T-cell (primary cell): ENCODE measurements at regions of chr7 and their contacts with region 1.

Region 1: DNA sequence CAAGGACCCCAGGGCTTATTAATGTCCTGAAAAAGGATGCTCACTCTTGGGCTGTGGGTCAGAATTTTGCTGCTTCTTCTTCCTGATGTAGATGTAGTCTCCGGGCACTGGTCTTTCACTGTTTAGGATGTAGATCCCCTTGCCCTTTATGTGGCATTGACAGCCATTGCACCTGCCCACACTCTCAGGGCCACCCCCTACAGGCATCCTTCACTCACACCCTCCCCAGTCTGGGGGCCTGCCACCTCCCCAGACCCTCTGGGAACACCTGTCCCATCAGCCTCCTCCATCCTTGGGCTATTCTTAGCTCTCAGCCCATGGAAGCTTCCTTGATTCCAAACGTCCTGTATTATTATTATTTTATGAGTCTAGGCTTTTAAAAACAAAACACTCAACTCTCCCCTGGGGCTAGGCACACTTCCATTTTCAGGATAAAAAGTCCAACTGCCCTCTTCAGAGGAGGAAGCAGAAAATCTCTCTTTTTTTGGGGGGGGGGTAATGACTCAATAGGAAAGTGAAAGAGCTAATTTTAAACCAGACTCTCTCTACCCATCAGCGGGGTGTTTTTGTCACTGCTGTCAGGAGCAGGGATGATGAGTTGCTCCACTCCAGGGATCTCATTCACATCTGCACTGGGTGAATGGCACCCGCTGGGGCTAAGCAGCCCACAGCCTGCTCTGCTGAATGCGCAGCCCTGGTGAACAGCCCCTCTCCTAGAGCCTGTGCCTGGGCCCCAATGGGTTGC is 11.5 kb upstream of the KLRG2 start:
- DNase-seq: no peak
- ATAC-seq: no peak
- H3K4me3 ChIP-seq: no peak overlapping the region
- H3K4me3 Mint-ChIP-seq: no peak overlapping the region
- H3K27ac ChIP-seq: no peak overlapping the region
- H3K27ac Mint-ChIP-seq: no peak overlapping the region
- H3K4me1 ChIP-seq: peaks cover 0 to 4% of the 10 kb centered on the region in 2 experiments
- H3K4me1 Mint-ChIP-seq: peaks cover 5 to 10% (median 6%) of the 10 kb centered on the region in 3 donors
- H3K27me3 ChIP-seq: peaks cover 0 to 14% of the 10 kb centered on the region in 2 experiments
- H3K27me3 Mint-ChIP-seq: peaks cover 0 to 2% of the 10 kb centered on the region in 2 donors

Region 2: GRCh38 chr7:139297795-139298194 is 197.2 kb before region 1 on chr7:
- CTCF ChIA-PET with region 1: no interaction called
- POLR2A ChIA-PET with region 1: no interaction called
- DNase-seq: no peak
- ATAC-seq: no peak
- H3K4me3 ChIP-seq: no peak overlapping the region
- H3K4me3 Mint-ChIP-seq: no peak overlapping the region
- H3K27ac ChIP-seq: no peak overlapping the region
- H3K27ac Mint-ChIP-seq: no peak overlapping the region
- H3K4me1 ChIP-seq: no peaks in the 10 kb centered on the region
- H3K4me1 Mint-ChIP-seq: no peaks in the 10 kb centered on the region
- H3K27me3 ChIP-seq: no peaks in the 10 kb centered on the region
- H3K27me3 Mint-ChIP-seq: no peaks in the 10 kb centered on the region

Region 3: DNA sequence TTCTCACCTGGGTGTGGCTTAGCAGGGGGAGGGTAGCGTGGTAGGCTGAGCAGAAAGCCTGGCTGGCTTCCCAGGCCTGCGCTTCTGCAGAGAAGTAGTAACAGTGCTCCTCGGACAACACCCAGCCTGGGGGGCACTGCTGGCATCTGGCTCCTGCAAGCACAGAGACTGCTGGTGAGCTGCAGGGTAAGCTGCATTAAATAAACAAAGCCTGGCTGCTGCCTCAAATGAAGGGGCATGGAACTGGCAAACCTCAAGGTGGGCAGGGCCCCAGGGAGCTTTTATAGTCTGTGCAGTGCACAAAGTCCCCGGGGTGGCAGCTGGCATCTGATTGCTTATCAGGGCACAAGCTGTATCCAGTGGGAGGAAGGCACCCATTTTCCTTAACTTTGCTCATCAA is 15.4 kb before region 1 on chr7:
- CTCF ChIA-PET with region 1: no interaction called
- POLR2A ChIA-PET with region 1: no interaction called
- DNase-seq: no peak
- ATAC-seq: no peak
- H3K4me3 ChIP-seq: no peak overlapping the region
- H3K4me3 Mint-ChIP-seq: no peak overlapping the region
- H3K27ac ChIP-seq: no peak overlapping the region
- H3K27ac Mint-ChIP-seq: no peak overlapping the region
- H3K4me1 ChIP-seq: peaks cover 0 to 12% of the 10 kb centered on the region in 2 experiments
- H3K4me1 Mint-ChIP-seq: peaks cover 0 to 6% (median 2%) of the 10 kb centered on the region in 3 donors
- H3K27me3 ChIP-seq: peaks cover 0 to 45% of the 10 kb centered on the region in 2 experiments
- H3K27me3 Mint-ChIP-seq: peaks cover 9 to 29% of the 10 kb centered on the region in 2 donors

Region 4: GRCh38 chr7:139702811-139703486 is 207.9 kb after region 1 on chr7:
- CTCF ChIA-PET with region 1: no interaction called
- POLR2A ChIA-PET with region 1: no interaction called
- DNase-seq: no peak
- ATAC-seq: no peak
- H3K4me3 ChIP-seq: no peak overlapping the region
- H3K4me3 Mint-ChIP-seq: no peak overlapping the region
- H3K27ac ChIP-seq: no peak overlapping the region
- H3K27ac Mint-ChIP-seq: no peak overlapping the region
- H3K4me1 ChIP-seq: no peaks in the 10 kb centered on the region
- H3K4me1 Mint-ChIP-seq: peaks cover 11 to 36% (median 31%) of the 10 kb centered on the region in 3 donors
- H3K27me3 ChIP-seq: no peaks in the 10 kb centered on the region
- H3K27me3 Mint-ChIP-seq: no peaks in the 10 kb centered on the region

Region 5: DNA sequence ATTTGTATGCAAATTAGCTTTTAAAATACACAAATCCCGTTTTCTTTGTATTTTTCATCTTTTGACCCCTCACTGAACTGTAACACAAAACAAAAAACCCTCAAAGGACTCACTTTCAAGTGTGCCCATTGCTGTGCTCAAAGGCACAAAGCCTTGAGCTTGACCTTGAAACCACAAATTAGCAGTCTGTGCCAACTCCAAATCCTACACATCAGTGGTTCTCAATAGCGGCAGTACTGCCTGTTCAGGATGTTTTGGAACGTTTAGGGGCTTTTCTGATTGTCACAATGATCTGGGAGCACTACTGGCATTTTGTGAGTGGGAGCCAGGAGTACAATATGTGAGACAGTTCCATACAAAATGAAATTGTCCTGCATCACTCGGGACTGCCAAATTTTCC is 626.3 kb after region 1 on chr7:
- CTCF ChIA-PET with region 1: interaction called in 1 of 2 experiments, 11 read pairs
- POLR2A ChIA-PET with region 1: no interaction called
- DNase-seq: no peak
- ATAC-seq: no peak
- H3K4me3 ChIP-seq: no peak overlapping the region
- H3K4me3 Mint-ChIP-seq: no peak overlapping the region
- H3K27ac ChIP-seq: no peak overlapping the region
- H3K27ac Mint-ChIP-seq: no peak overlapping the region
- H3K4me1 ChIP-seq: no peaks in the 10 kb centered on the region
- H3K4me1 Mint-ChIP-seq: peaks cover 0 to 2% (median 0%) of the 10 kb centered on the region in 3 donors
- H3K27me3 ChIP-seq: no peaks in the 10 kb centered on the region
- H3K27me3 Mint-ChIP-seq: no peaks in the 10 kb centered on the region